WTC11 (cell line): ENCODE measurements at regions of chr15 and their contacts with region 1.

Region 1: DNA sequence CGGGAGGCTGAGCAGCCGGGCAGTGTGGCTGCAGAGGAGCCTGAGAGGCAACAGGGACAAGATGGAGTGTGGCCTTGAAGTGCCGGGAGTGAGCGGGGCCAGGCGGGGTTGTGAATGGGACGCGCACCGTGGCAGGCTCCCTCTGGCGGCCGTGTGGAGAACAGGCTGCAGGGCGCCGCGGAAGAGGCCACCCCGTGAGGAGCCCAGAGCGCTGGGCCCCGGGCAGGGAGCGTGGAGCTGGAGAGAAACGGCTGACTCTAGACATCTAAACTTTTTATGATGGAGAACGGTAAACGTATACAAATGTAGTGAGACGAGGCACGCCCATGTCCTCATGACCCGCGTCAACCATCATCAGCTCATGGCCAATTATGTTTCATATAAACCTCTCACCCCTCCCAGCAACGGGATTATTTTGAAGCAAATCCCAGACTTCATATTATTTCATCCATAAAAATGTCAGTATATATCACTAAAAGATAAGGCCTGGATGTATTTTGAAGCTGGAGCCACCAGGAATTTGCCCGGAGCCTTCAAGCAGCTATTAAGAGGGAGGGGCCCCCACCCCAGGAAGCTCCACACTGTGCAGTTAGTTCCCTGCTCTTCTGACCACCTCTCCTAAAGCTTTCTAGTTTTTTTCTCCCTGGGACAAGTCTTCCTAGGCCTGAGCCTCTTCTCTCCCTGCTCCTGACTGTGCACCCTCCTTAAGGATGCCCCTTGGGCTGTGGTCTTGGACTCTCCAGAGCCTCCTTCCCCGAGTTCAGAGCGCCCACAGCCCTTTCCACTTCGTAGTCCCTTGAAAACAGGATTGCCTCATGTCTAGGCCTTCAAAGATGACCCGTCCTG is 149.4 kb downstream of the SMAD6 start:
- DNase-seq: peak; percentile 86
- ATAC-seq: peak; percentile 86
- H3K4me3 Mint-ChIP-seq: no peak overlapping the region
- H3K27ac Mint-ChIP-seq: no peak overlapping the region
- H3K4me1 Mint-ChIP-seq: peaks cover 20% of the 10 kb centered on the region
- H3K27me3 Mint-ChIP-seq: peaks cover 16% of the 10 kb centered on the region
- CTCF ChIP-seq: peak; percentile 93

Region 2: GRCh38 chr15:66566963-66567531 is 284.4 kb before region 1 on chr15:
- CTCF ChIA-PET with region 1: interaction called, 20 read pairs
- POLR2A ChIA-PET with region 1: no interaction called
- DNase-seq: peak; percentile 77
- ATAC-seq: peak; percentile 49
- H3K4me3 Mint-ChIP-seq: peak overlapping the region; percentile 19; the same call in 1 of the 2 replicates
- H3K27ac Mint-ChIP-seq: peak overlapping the region; percentile 91
- H3K4me1 Mint-ChIP-seq: peaks cover 30% of the 10 kb centered on the region
- H3K27me3 Mint-ChIP-seq: no peaks in the 10 kb centered on the region
- CTCF ChIP-seq: peak; percentile 63

Region 3: DNA sequence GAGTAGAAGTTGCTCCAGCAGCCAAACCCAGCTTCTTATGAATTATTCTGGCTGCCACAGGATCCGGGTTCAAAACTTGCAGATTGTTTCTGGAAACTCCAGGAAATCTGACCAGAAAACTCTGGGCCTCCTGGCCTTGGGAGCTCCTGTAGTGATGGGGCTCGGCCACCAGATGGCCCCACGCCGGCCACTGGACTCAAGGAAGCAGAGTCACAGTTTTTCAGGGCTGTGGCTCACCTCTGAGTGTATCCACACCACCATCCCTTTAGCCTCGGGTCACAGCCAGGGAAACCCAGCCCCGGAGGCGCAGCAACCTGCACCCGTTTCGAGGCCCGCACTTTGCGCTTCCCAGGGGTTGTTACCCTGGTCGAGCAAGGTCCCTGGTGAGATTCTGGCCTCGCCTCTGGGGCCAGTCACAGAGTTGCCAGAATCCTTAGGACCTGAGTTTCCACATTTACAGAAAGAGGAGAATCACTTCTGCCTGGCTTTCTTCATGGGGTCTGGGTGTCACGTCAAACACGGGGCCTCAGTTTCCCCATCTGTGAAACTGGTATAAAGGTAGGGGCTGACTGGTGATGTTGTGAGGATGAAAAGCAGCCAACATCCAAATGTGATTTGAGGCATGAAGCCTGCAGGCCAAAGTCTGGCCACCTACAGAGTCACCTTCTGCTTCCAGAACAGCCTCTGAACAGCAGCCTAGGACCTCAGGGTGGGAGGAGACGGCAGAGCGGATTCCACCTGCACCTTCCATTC is 232.1 kb before region 1 on chr15:
- CTCF ChIA-PET with region 1: interaction called, 23 read pairs
- POLR2A ChIA-PET with region 1: no interaction called
- DNase-seq: peak; percentile 85
- ATAC-seq: peak; percentile 67
- H3K4me3 Mint-ChIP-seq: no peak overlapping the region
- H3K27ac Mint-ChIP-seq: no peak overlapping the region; the same call in 1 of the 2 replicates
- H3K4me1 Mint-ChIP-seq: peaks cover 64% of the 10 kb centered on the region
- H3K27me3 Mint-ChIP-seq: peaks cover 5% of the 10 kb centered on the region
- CTCF ChIP-seq: peak; percentile 73

Region 4: GRCh38 chr15:66714543-66714981 is 136.9 kb before region 1 on chr15:
- CTCF ChIA-PET with region 1: interaction called, 10 read pairs
- POLR2A ChIA-PET with region 1: interaction called, 3 read pairs
- DNase-seq: no peak
- ATAC-seq: no peak
- H3K4me3 Mint-ChIP-seq: no peak overlapping the region
- H3K27ac Mint-ChIP-seq: no peak overlapping the region
- H3K4me1 Mint-ChIP-seq: peaks cover 24% of the 10 kb centered on the region
- H3K27me3 Mint-ChIP-seq: no peaks in the 10 kb centered on the region
- CTCF ChIP-seq: no peak

Region 5: DNA sequence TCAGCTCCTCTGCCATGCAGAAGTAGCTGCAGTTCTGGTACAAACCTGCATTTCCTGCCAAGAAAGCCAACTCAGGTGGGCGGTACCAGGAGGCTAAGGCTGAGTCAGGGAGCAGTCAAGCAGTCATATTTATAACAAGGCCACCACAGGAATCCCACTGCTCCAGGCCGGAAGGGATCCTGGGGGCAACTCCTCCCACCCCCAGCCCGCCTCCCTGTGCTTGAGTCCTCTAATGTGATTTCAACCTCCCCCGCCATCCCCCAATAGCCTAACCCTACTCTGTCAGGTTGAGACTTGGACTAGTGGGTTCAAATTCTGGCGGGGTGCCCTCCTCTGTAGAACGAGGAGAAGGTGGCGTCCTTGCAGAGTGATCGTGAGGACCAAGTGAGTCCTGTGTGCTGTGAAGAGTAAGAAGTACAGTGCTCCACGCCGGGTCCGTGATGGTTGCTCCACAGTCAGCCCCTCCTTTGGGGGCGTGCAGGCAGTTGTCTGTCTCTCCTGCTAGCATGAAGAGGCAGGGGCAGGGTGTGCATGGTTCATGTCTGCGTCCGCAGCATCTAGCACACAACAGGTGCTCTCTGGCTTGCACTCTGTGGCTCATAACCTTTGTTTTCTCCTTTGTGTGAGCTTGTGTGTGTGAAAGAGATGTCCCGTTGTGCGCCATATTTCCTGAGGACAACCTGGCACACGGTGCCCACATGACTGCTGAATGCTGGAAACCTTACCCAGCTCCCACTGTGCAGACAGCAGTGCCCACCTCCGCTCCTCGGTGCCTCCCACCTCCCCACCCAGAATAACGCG is 71.1 kb before region 1 on chr15:
- CTCF ChIA-PET with region 1: interaction called, 55 read pairs
- POLR2A ChIA-PET with region 1: interaction called, 3 read pairs
- DNase-seq: no peak
- ATAC-seq: peak; percentile 71
- H3K4me3 Mint-ChIP-seq: no peak overlapping the region
- H3K27ac Mint-ChIP-seq: no peak overlapping the region
- H3K4me1 Mint-ChIP-seq: peaks cover 16% of the 10 kb centered on the region
- H3K27me3 Mint-ChIP-seq: no peaks in the 10 kb centered on the region
- CTCF ChIP-seq: no peak

Region 6: DNA sequence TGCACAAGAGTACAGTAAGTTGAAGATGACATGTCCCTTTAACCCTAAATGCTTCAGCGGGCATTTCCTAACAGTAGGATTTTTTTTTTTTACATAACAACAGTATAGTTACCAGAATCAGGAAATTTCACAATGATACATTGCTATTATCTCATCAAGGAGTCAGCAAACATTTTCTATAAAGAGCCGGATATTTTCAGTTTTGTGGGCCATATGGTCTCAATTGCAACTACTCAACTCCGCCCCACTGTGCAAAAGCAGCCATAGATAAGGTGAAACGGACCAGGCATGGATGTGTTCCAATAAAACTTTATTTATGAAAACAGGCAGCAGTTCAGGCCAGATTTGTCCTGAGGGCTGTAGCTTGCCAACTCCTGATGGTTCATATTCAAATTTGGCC is 18.8 kb before region 1 on chr15:
- CTCF ChIA-PET with region 1: interaction called, 33 read pairs
- POLR2A ChIA-PET with region 1: no interaction called
- DNase-seq: no peak
- ATAC-seq: no peak
- H3K4me3 Mint-ChIP-seq: no peak overlapping the region
- H3K27ac Mint-ChIP-seq: no peak overlapping the region
- H3K4me1 Mint-ChIP-seq: peaks cover 52% of the 10 kb centered on the region
- H3K27me3 Mint-ChIP-seq: peaks cover 16% of the 10 kb centered on the region
- CTCF ChIP-seq: no peak